ENCODE measurements at regions of chr10 and their contacts with region 1.

Region 1: DNA sequence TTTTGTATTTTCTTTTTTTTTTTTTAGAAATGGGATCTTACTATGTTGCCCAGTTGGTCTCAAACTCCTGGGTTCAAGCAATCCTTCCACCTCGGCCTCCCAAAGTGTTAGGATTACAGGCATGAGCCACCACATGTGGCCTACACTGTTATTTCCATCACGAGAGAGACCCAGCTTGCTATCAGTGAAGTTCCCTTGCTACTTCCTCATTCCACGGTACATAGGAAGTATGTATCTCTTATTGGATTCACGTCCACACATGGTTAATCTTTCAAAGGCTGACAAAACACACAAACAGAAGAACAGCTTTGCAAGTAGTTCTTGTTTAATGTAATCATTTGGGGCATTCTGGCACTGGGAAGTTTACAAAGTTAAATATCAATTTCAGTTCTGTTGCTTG is 50.9 kb downstream of the DCLRE1A start:
- DNase-seq: no peak
- H3K4me3 ChIP-seq: no peak overlapping the region
- H3K27ac ChIP-seq: no peak overlapping the region
- H3K4me1 ChIP-seq: no peaks in the 10 kb centered on the region
- H3K27me3 ChIP-seq: no peaks in the 10 kb centered on the region
- CTCF ChIP-seq: no peak
- POLR2A ChIP-seq: no peak

Region 2: GRCh38 chr10:114103284-114103683 is 300.3 kb after region 1 on chr10:
- intact Hi-C with region 1: loop called (anchors 5 kb)
- DNase-seq: no peak
- H3K4me3 ChIP-seq: no peak overlapping the region
- H3K27ac ChIP-seq: no peak overlapping the region
- H3K4me1 ChIP-seq: peaks cover 7% of the 10 kb centered on the region
- H3K27me3 ChIP-seq: no peaks in the 10 kb centered on the region
- CTCF ChIP-seq: peak; percentile 28 to 53 (median 33)
- POLR2A ChIP-seq: no peak